Calu3 (cell line): ENCODE measurements at regions of chr10 and their contacts with region 1.

Region 1: DNA sequence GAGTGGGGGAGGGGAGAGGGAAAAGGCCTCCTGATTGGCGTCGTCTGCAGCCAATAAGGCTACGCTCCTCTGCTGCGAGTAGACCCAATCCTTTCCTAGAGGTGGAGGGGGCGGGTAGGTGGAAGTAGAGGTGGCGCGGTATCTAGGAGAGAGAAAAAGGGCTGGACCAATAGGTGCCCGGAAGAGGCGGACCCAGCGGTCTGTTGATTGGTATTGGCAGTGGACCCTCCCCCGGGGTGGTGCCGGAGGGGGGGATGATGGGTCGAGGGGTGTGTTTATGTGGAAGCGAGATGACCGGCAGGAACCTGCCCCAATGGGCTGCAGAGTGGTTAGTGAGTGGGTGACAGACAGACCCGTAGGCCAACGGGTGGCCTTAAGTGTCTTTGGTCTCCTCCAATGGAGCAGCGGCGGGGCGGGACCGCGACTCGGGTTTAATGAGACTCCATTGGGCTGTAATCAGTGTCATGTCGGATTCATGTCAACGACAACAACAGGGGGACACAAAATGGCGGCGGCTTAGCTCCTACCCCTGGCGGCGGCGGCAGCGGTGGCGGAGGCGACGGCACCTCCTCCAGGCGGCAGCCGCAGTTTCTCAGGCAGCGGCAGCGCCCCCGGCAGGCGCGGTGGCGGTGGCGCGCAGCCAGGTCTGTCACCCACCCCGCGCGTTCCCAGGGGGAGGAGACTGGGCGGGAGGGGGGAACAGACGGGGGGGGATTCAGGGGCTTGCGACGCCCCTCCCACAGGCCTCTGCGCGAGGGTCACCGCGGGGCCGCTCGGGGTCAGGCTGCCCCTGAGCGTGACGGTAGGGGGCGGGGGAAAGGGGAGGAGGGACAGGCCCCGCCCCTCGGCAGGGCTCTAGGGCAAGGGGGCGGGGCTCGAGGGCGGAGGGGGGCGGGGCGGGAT is at the start of gene KAT6B:
- DNase-seq: peak; percentile 100
- H3K4me3 Mint-ChIP-seq: peak within 1 kb of the TSS; percentile 66
- H3K27ac Mint-ChIP-seq: peak within 1 kb of the TSS; percentile 100
- H3K4me1 Mint-ChIP-seq: peaks cover 31% of the 10 kb centered on the region
- H3K27me3 Mint-ChIP-seq: no peaks in the 10 kb centered on the region
- CTCF ChIP-seq: no peak
- total RNA-seq, gene KAT6B: 28.2 and 28.6 TPM in 2 replicates

Region 2: DNA sequence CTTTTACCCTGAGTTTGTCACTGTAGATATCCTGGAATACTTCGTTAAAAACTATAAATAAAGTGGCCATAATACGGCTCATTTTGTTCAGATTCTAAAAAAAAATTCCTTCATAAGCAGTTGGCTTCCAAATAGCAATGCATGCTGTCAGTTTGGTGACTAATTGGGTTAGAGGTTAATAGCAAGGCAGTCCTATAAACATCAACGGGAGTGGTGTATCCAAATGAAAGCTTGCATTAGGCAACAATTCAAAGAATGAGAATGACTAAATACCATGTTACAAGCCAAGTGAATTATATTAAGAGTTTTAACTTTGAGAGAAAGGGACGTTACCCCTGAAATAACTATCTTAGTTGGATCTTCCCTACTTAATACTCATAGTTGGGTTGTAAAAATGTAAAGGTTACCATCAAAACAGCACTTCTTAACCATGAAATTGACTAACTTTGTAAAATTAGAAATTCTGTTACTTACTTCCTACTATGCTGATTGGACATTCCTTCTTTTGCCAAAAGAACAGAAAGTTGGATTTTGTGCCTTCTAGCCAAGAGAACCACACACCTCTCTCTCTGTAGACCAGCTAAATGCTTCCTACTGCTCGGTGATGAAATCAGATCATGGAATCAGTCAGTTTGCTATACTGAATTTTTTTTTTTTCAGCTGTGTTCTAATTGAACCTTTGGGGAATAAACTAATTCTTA is 98.0 kb after region 1 on chr10:
- CTCF ChIA-PET with region 1: no interaction called
- intact Hi-C with region 1: loop called (anchors 5 kb)
- DNase-seq: peak; percentile 35
- H3K4me3 Mint-ChIP-seq: no peak overlapping the region
- H3K27ac Mint-ChIP-seq: peak overlapping the region; percentile 69
- H3K4me1 Mint-ChIP-seq: peaks cover 65% of the 10 kb centered on the region
- H3K27me3 Mint-ChIP-seq: no peaks in the 10 kb centered on the region
- CTCF ChIP-seq: no peak

Region 3: GRCh38 chr10:74991440-74992130 is 165.2 kb after region 1 on chr10:
- CTCF ChIA-PET with region 1: interaction called, 4 read pairs
- intact Hi-C with region 1: loop called (anchors 10 kb)
- DNase-seq: peak; percentile 34
- H3K4me3 Mint-ChIP-seq: no peak overlapping the region
- H3K27ac Mint-ChIP-seq: no peak overlapping the region
- H3K4me1 Mint-ChIP-seq: no peaks in the 10 kb centered on the region
- H3K27me3 Mint-ChIP-seq: no peaks in the 10 kb centered on the region
- CTCF ChIP-seq: peak; percentile 67